ENCODE measurements at regions of chr1 and their contacts with region 1.

Region 1: DNA sequence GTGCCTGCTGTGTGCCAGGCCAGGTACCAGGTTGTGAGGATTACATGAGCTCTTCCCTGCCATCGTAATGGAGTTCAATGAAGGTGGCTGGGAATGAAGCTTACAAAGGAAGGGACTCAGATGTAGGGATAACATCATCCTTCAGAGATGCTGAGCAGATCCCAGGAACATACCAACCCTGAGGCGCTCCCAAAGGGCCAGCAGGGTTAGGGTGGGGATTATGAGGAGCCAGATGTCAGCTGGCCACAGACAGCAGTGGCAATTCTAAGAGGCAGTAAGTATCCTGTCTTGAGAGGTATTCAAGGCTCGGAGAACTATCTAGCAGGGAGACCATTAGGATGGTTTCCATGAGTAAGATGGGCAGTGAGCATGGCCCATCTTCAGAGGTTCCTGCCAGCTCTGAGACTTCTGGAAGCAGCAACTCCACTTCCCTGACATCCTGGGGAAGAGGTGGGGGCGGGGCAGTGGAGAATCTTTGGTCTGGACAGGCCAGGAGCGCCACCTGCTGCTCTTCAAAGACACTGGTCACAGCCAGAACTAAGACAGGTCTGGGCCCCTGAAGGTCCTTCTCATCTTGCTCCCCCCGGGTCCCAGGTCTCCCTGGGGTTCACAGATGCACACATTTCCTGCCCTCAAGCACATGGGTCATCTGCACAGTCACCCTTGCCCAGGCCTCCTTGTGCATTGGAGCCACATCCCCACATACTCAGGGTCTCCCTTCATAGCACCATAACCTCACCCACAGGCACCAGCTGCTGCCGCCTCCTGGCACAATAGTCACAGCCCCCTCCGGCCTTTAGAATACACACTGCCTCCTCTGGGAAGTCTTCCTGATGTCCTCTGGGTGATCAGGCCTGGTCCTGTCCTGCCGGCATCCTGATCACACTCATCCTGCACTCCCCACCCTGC is 2.7 kb upstream of the SDC3 start:
- DNase-seq: peak; percentile 87 to 90
- ATAC-seq: peak; percentile 68 to 88 (median 79)
- H3K4me3 ChIP-seq: no peak overlapping the region
- H3K27ac ChIP-seq: peak overlapping the region in 1 of 10 donors; percentile 85
- H3K4me1 ChIP-seq: peaks cover 3 to 61% (median 20%) of the 10 kb centered on the region in 9 donors
- H3K27me3 ChIP-seq: peaks cover 0 to 27% (median 0%) of the 10 kb centered on the region in 7 donors
- CTCF ChIP-seq: peak; percentile 77 to 94 (median 89)

Region 2: DNA sequence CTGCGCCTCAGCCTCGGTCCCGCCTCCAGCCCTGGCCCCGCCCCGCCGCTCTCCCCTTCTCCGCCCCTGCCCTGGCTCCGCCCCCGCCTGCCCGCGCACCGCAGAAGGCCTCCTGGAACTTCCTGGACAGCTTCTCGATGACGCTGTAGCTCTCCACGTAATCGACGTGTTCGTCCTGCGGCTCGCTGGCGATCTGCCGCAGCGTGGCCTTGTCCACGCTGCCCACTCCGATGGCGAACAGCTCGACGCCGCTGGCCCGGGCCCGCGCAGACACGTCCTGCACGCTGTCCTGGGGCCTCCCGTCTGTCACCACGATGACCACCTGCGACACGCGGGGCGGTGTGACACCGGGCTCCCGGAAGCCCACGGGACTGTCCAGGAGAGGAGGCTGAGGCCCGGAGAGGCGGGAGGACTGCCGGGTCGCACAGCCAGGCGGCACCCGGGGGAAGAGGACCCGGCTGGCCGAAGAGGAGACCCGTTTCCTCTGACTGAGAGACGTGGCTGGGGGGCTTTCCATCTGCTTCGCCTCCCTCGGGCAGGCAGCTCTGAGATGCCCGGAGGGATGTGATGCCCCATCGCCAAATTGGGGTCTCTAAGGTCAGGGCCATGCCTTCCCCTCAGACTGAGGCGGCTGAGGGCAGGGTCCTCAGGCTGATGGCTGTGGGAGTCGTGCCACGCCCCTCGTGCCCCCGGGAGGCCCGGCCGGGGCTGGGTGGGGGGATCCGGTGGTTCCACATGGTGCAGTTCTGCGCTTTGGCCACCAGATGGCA is 192.5 kb before region 1 on chr1:
- intact Hi-C with region 1: loop called in 9 of 10 experiments (anchors 1 to 5 kb)
- DNase-seq: peak; percentile 79 to 85
- ATAC-seq: peak; percentile 86 to 92 (median 89)
- H3K4me3 ChIP-seq: peak overlapping the region; percentile 48 to 65 (median 60)
- H3K27ac ChIP-seq: peak overlapping the region; percentile 74 to 99 (median 96)
- H3K4me1 ChIP-seq: peaks cover 0 to 15% (median 10%) of the 10 kb centered on the region in 9 donors
- H3K27me3 ChIP-seq: no peaks in the 10 kb centered on the region
- CTCF ChIP-seq: peak; percentile 93 to 100 (median 98)

Region 3: DNA sequence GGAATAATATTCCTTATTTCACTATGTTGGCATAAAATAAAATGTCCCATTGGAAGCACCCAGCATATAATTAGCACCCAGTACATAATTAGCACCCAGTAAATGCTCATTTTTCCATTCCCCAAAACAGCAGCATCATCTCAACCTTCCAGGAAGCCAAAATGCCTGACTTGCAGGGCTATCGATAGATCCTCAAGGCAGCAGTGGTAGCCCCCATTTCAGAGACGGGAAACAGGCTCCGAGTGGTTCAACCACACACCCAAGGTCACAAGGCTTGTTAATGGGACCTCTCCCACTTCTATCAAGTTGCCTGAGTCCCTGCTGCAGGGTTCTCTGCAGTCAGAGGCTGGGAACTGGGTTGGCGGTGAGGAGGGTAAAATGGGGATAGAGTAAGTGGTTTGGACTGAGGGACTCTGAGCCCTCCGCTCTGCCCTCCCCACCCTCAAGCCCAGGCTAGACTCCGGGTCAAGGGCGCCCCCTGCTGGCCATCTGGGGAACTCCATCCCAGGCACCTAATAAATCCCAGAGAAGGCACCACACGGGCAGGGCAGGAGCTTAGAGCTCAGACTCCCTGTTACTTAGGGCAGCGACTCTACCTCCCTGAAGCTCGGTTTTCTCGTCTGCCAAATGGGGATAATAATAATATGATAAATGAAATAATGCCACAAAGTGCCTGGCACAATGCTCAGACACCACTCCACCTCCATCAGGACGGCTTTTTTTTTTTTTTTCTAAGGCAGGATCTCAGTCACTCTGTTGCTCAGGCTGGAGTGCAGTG is 131.8 kb before region 1 on chr1:
- intact Hi-C with region 1: loop called in 8 of 10 experiments (anchors 1 to 5 kb)
- DNase-seq: peak; percentile 78 to 86
- ATAC-seq: peak; percentile 53 to 81 (median 74)
- H3K4me3 ChIP-seq: no peak overlapping the region
- H3K27ac ChIP-seq: peak overlapping the region in 1 of 10 donors; percentile 80
- H3K4me1 ChIP-seq: peaks cover 0 to 49% (median 4%) of the 10 kb centered on the region in 9 donors
- H3K27me3 ChIP-seq: peaks cover 0 to 14% (median 0%) of the 10 kb centered on the region in 7 donors
- CTCF ChIP-seq: peak; percentile 91 to 98 (median 96)

Region 4: DNA sequence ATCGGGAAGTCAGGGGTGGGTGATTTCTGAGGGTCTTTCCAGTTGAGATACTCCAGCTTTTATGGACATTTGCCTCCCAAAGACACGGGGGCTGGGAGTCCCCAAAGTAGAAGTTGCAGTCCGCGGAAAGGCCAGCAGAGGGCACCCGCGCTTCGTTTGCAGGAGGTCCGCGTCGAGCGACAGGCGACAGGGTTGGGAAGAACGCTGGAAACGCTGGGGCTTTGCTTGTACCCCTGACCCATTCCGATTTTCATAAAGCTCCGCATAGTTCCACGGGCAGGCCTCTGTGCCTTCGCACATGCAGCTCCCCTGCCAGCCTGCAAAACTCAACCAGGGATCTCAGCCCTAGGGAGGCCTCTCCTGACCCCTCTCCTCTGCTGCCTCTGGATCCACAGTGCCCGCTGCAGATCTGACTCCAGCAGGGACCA is 109.5 kb before region 1 on chr1:
- intact Hi-C with region 1: loop called (anchors 1 to 2 kb)
- DNase-seq: peak; percentile 81 to 88
- ATAC-seq: peak; percentile 40 to 87 (median 70)
- H3K4me3 ChIP-seq: peak overlapping the region in 1 of 10 donors; percentile 25
- H3K27ac ChIP-seq: no peak overlapping the region
- H3K4me1 ChIP-seq: peaks cover 11 to 42% (median 26%) of the 10 kb centered on the region in 9 donors
- H3K27me3 ChIP-seq: peaks cover 0 to 39% (median 0%) of the 10 kb centered on the region in 7 donors
- CTCF ChIP-seq: peak; percentile 95 to 98 (median 97)

Region 5: DNA sequence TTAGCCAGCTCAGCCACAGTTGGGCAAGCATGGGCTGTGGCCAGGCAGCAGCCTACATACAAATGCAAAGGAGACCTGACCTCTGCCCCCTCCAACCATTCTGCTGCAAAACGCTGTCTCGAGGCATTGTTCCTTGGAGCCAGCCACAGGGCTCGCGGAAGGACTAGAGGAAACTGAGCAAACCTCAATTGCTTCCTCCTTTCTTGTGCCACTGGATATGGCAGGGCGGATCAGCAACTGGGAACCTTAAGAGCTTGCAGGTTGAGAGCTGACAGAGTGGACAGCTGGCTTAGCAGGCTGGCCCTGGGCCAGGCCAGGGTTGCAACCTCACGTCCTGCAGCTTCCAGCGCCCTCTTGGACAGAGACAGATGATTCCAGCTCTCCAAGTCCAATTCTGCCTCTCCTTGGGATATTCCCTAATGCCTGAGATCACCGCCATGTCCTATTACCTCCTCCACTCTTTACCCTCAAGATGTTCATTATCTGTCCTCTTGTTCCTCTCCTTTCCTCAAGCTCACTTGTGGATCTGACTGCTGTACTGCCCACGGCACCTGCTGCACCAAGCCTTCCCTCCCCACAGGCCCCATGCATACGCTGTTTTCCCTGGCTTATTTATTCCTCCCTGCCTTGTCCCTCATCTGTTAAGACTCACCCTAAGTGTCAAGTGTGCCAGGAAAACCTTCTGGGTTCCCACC is 70.2 kb before region 1 on chr1:
- intact Hi-C with region 1: loop called in 3 of 10 experiments (anchors 2 to 5 kb)
- DNase-seq: peak; percentile 40 to 63
- ATAC-seq: peak in 7 of 8 donors; percentile 50 to 80 (median 71)
- H3K4me3 ChIP-seq: no peak overlapping the region
- H3K27ac ChIP-seq: no peak overlapping the region
- H3K4me1 ChIP-seq: peaks cover 0 to 31% (median 14%) of the 10 kb centered on the region in 9 donors
- H3K27me3 ChIP-seq: peaks cover 0 to 78% (median 0%) of the 10 kb centered on the region in 7 donors
- CTCF ChIP-seq: peak in 2 of 9 donors; percentile 13 to 18

Region 6: DNA sequence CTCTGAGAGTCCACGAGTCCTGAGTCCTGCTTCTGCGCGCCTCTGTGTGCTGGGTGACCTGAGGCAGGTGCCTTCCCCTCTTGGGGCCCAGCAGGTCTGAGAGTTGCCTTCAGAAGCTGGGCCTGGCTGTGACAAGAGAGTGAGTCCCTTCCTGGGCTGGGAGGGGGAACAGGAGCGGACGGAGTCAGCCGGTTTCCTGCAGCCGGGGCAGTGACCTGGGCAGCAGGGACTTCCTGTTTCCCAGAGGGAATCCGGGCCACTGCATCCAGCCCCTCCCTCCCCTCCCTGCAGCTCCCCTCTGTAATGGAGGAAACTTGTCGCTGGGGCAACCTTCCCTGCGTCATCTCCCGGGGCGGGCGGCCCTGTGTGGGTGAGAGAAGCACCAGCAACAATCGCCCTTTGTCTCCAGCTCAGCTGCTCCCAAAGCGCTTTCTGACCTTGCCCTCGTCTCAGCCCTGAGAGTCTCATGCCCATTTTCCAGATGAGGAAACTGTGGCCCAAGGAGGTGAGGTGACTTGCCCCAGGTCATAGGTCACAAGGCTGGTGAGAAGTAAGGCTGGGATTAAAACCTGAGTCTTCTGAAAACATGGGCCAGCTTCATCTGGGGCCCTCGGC is 63.8 kb before region 1 on chr1:
- intact Hi-C with region 1: loop called in 3 of 10 experiments (anchors 2 to 10 kb)
- DNase-seq: peak; percentile 83 to 94
- ATAC-seq: peak; percentile 85 to 96 (median 94)
- H3K4me3 ChIP-seq: no peak overlapping the region
- H3K27ac ChIP-seq: peak overlapping the region; percentile 55 to 90 (median 83)
- H3K4me1 ChIP-seq: peaks cover 10 to 48% (median 24%) of the 10 kb centered on the region in 9 donors
- H3K27me3 ChIP-seq: peaks cover 0 to 60% (median 0%) of the 10 kb centered on the region in 7 donors
- CTCF ChIP-seq: no peak

Region 7: DNA sequence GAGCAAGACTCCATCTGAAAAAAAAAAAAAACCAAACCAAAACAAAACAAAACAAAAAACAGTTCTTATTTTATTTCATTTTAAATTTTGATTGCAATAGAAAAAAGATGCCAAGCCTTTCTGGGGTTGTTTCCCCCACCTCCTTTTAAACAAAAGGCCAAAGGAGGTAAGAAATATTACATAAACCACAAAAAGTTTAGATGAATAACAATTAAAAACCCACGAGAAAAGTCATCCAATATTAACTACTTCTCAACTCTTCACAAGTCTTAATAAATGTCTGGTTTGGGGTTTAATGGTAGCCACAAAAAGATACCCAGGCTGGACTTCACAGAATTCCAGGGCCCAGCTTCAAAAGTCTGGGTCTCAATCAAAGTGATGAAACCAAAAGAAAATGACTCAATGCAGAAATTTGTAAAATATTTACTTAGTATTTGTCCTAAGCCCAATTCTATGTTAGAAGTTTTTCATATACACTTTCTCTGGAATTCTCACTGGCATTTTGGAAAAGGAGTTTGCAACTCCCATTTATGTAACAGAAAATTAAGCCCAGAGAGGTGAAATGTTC is 44.2 kb after region 1 on chr1:
- intact Hi-C with region 1: no loop called
- DNase-seq: no peak
- ATAC-seq: no peak
- H3K4me3 ChIP-seq: no peak overlapping the region
- H3K27ac ChIP-seq: no peak overlapping the region
- H3K4me1 ChIP-seq: peaks cover 0 to 7% (median 3%) of the 10 kb centered on the region in 9 donors
- H3K27me3 ChIP-seq: no peaks in the 10 kb centered on the region
- CTCF ChIP-seq: no peak

Region 8: DNA sequence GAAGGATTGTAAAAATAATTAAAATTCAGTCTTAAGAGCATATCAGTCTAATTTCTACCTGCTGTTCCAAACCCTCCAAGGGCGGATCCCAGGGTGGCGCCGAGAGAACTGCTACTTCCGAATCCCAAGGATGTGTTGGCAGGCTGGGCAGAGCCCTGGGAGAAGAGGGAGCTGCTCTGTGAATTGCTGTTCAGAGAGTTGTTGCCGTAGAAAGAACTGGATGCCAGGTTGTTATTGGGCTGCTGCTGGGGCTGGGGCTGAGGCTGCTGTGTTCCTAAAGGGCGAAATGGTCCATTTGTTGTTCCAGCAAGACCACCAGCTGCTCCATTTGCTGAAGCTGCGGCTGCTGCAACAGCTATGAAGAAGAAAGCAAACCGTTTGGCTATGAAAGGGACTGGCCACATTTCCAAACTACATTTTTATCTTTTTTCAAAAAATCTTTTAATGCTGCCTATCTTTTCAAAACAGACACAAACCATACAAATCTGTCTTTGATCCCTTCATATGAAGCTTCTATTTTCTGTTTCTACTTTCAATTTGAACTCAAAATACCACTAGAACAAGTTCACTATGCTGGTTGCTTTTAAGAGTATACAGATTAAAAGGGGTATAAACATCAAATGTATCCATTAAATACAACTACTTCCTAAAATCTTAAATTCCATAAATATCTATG is 54.8 kb after region 1 on chr1:
- intact Hi-C with region 1: no loop called
- DNase-seq: no peak
- ATAC-seq: peak in 5 of 8 donors; percentile 6 to 52 (median 45)
- H3K4me3 ChIP-seq: no peak overlapping the region
- H3K27ac ChIP-seq: peak overlapping the region in 6 of 10 donors; percentile 33 to 82 (median 73)
- H3K4me1 ChIP-seq: peaks cover 8 to 65% (median 45%) of the 10 kb centered on the region in 9 donors
- H3K27me3 ChIP-seq: no peaks in the 10 kb centered on the region
- CTCF ChIP-seq: no peak

Region 9: GRCh38 chr1:31335007-31335406 is 423.7 kb after region 1 on chr1:
- intact Hi-C with region 1: no loop called
- DNase-seq: no peak
- ATAC-seq: no peak
- H3K4me3 ChIP-seq: no peak overlapping the region
- H3K27ac ChIP-seq: no peak overlapping the region
- H3K4me1 ChIP-seq: no peaks in the 10 kb centered on the region
- H3K27me3 ChIP-seq: no peaks in the 10 kb centered on the region
- CTCF ChIP-seq: peak in 8 of 9 donors; percentile 14 to 61 (median 48)

Measured in heart right ventricle (tissue), 16 donors.